ENCODE measurements at regions of chr10 and their contacts with region 1.

Region 1: GRCh38 chr10:22003079-22003913 is at the start of gene DNAJC1:
- DNase-seq: peak; percentile 90
- ATAC-seq: peak; percentile 99
- H3K4me3 ChIP-seq: peak within 1 kb of the TSS; percentile 69
- H3K27ac ChIP-seq: peak within 1 kb of the TSS; percentile 29
- H3K4me1 ChIP-seq: no peaks in the 10 kb centered on the region; the same call in 1 of the 2 replicates
- H3K27me3 ChIP-seq: no peaks in the 10 kb centered on the region; the same call in none of the 2 replicates
- CTCF ChIP-seq: no peak; the same call in 1 of the 2 replicates
- POLR2A ChIP-seq: peak; percentile 62
- RAD21 ChIP-seq: no peak
- total RNA-seq, gene DNAJC1: 13.3 and 22.8 TPM in 2 replicates

Region 2: GRCh38 chr10:22022257-22023032 is 19.1 kb after region 1 on chr10:
- CTCF ChIA-PET with region 1: no interaction called
- POLR2A ChIA-PET with region 1: interaction called, 21 read pairs
- dilution Hi-C with region 1: no loop called
- in situ Hi-C with region 1: no loop called
- intact Hi-C with region 1: no loop called
- DNase-seq: no peak
- ATAC-seq: no peak
- H3K4me3 ChIP-seq: no peak overlapping the region
- H3K27ac ChIP-seq: no peak overlapping the region
- H3K4me1 ChIP-seq: no peaks in the 10 kb centered on the region
- H3K27me3 ChIP-seq: peaks cover 4% of the 10 kb centered on the region
- CTCF ChIP-seq: no peak
- POLR2A ChIP-seq: no peak
- RAD21 ChIP-seq: no peak

Region 3: DNA sequence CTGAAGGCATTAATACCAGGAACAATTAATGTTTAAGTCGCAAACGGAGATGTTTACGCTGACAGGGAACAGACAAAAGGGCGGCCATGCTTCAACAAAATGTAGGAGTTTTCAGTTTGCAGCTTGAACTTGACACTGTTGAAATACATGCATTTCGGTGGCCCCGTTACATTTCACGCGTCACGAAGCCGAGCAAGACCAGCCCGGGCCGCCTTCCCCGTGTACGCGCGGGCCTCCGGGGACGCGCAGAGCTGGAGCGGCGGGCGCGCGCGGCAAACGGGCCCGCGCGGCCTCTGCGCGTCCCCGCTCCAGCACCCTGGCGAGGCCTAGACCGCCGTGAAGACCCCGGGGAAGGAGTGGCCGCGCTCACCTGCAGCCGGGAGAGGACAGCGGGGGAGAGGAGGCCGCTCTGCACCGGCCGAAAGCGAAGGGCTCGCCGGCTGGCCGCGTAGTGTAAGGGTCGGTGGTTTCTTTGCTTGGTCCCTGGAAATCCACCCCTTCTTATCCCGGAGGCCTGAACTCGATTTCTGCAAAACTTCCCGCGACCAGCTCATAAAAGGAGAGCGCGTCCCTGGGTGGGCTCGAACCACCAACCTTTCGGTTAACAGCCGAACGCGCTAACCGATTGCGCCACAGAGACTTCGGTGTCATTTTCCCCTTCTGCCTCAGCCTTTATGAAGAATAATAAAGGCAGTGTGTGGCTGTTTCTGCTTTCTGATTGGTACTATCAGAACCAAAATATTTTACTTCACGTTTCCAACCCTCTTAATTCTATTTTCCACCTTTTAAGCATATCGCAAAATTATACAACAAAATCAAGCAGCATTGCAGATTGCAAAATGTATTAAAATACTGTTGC is 225.9 kb after region 1 on chr10:
- CTCF ChIA-PET with region 1: no interaction called
- POLR2A ChIA-PET with region 1: no interaction called
- dilution Hi-C with region 1: no loop called
- in situ Hi-C with region 1: no loop called
- intact Hi-C with region 1: loop called (anchors 5 kb)
- DNase-seq: peak; percentile 91
- ATAC-seq: peak; percentile 95
- H3K4me3 ChIP-seq: peak overlapping the region; percentile 74
- H3K27ac ChIP-seq: peak overlapping the region; percentile 53
- H3K4me1 ChIP-seq: no peaks in the 10 kb centered on the region
- H3K27me3 ChIP-seq: peaks cover 4% of the 10 kb centered on the region; the same call in 1 of the 2 replicates
- CTCF ChIP-seq: no peak
- POLR2A ChIP-seq: no peak
- RAD21 ChIP-seq: no peak

Region 4: GRCh38 chr10:22316285-22317120 is 313.2 kb after region 1 on chr10 and contains the start of gene COMMD3:
- CTCF ChIA-PET with region 1: no interaction called
- POLR2A ChIA-PET with region 1: no interaction called
- dilution Hi-C with region 1: no loop called
- in situ Hi-C with region 1: loop called (anchors 10 kb)
- intact Hi-C with region 1: loop called (anchors 2 kb)
- DNase-seq: peak; percentile 86
- ATAC-seq: peak; percentile 74
- H3K4me3 ChIP-seq: peak within 1 kb of the TSS; percentile 76
- H3K27ac ChIP-seq: peak within 1 kb of the TSS; percentile 93
- H3K4me1 ChIP-seq: no peaks in the 10 kb centered on the region
- H3K27me3 ChIP-seq: peaks cover 2% of the 10 kb centered on the region; the same call in 1 of the 2 replicates
- CTCF ChIP-seq: no peak
- POLR2A ChIP-seq: no peak
- RAD21 ChIP-seq: no peak
- total RNA-seq, gene COMMD3: 33.1 and 44.8 TPM in 2 replicates

Region 5: DNA sequence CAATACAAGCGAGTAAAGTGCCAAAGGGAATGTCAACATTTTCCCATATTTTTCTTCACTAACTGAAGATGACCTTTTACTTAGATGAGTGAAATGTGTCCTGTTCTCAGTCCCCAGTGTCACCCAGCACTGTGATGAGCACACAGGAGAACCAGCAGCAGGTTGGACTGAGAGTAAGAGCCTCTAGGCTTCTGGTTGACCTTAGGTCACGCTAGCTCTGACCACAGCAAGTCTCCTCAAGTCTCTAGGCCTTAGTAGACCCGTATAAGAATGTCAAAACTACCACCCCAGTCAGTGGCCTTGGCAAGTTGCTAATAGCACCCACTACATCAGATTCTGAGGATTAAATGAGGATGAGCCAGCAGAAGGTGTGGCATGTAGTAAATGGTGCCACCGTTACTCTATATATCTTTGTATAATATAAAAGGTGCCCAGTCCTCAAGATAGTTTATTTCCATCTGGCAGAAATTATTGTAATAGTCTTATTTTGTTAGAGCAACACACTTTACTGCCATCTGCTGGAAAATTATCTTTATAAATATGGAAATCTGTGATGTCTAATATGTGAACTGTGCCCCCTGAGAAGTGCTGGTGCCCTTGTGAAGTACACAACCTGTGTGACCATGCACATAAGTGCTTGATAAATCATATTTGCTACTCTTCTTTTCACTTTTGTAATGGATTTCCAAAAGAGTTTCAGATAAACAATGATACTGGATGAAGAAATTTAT is 417.7 kb after region 1 on chr10:
- CTCF ChIA-PET with region 1: no interaction called
- POLR2A ChIA-PET with region 1: no interaction called
- dilution Hi-C with region 1: no loop called
- in situ Hi-C with region 1: loop called (anchors 25 kb)
- intact Hi-C with region 1: no loop called
- DNase-seq: peak; percentile 16
- ATAC-seq: peak; percentile 32
- H3K4me3 ChIP-seq: no peak overlapping the region
- H3K27ac ChIP-seq: no peak overlapping the region
- H3K4me1 ChIP-seq: no peaks in the 10 kb centered on the region
- H3K27me3 ChIP-seq: peaks cover 2% of the 10 kb centered on the region; the same call in 1 of the 2 replicates
- CTCF ChIP-seq: peak; percentile 31; the same call in 1 of the 2 replicates
- POLR2A ChIP-seq: no peak
- RAD21 ChIP-seq: peak; percentile 38; the same call in 1 of the 2 replicates

Region 6: GRCh38 chr10:22550732-22551131 is 547.4 kb after region 1 on chr10:
- CTCF ChIA-PET with region 1: no interaction called
- POLR2A ChIA-PET with region 1: no interaction called
- dilution Hi-C with region 1: no loop called
- in situ Hi-C with region 1: loop called (anchors 25 kb)
- intact Hi-C with region 1: loop called (anchors 10 kb)
- DNase-seq: peak; percentile 4
- ATAC-seq: no peak
- H3K4me3 ChIP-seq: no peak overlapping the region
- H3K27ac ChIP-seq: no peak overlapping the region
- H3K4me1 ChIP-seq: peaks cover 3% of the 10 kb centered on the region; the same call in 1 of the 2 replicates
- H3K27me3 ChIP-seq: no peaks in the 10 kb centered on the region
- CTCF ChIP-seq: peak; percentile 46
- POLR2A ChIP-seq: no peak
- RAD21 ChIP-seq: peak; percentile 24; the same call in 1 of the 2 replicates

Region 7: DNA sequence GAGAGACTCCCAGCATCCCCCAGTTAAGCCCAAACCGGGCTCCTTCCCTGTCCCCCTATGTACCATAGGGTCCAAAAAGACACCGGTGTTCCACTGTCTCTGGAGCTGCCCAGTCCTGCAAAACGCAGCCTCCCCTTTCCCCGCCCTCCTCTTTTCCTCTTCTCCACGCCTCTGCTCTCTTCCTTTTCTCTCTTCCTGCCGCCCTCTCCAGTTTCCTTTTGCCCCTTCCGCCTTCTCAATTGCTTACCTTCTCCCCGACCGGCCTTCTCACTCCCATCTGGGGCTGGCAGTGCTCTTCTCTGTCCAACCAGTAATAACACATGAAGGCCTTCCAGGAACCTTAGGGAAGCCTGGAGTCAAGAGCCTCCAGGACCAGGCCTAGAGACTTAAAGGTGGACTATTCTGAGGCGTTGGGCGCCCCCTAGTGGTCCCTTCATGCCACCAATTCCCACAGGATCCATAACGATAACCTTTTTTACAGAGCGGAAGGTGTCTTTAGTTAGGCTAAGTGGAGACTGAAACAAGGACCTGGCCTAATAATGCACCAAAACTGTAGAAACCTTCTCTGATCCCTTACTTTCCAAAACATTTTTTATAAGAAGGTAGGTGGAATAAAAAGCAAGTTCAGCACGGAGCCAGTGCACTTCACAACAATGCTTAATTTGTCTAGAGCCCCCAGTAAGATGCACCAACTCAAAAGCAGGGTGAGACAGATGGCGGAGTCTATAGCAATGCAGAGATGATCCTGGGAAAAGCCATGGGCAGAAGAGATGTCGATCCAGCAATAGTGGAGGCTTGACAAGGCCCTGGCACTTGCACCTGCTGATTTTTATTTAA is 1064.9 kb after region 1 on chr10:
- CTCF ChIA-PET with region 1: no interaction called
- POLR2A ChIA-PET with region 1: no interaction called
- dilution Hi-C with region 1: no loop called
- in situ Hi-C with region 1: no loop called
- intact Hi-C with region 1: loop called (anchors 5 kb)
- DNase-seq: peak; percentile 63
- ATAC-seq: peak; percentile 84
- H3K4me3 ChIP-seq: no peak overlapping the region
- H3K27ac ChIP-seq: no peak overlapping the region
- H3K4me1 ChIP-seq: no peaks in the 10 kb centered on the region
- H3K27me3 ChIP-seq: peaks cover 6% of the 10 kb centered on the region
- CTCF ChIP-seq: peak; percentile 72
- POLR2A ChIP-seq: no peak
- RAD21 ChIP-seq: peak; percentile 67